Activated CD4-positive, alpha-beta T cell treated with anti-CD3 and anti-CD28 coated beads for 36 hours (primary cell): ENCODE measurements at regions of chr2 and their contacts with region 1.

Region 1: GRCh38 chr2:165953655-165954606 is at the start of gene TTC21B:
- DNase-seq: peak; percentile 96
- ATAC-seq: peak; percentile 96
- H3K4me3 Mint-ChIP-seq: no peak within 1 kb of the TSS
- H3K27ac Mint-ChIP-seq: peak within 1 kb of the TSS; percentile 70
- H3K4me1 Mint-ChIP-seq: peaks cover 12% of the 10 kb centered on the region
- H3K27me3 Mint-ChIP-seq: no peaks in the 10 kb centered on the region
- total RNA-seq, gene TTC21B: 24.5 to 28.5 TPM

Region 2: DNA sequence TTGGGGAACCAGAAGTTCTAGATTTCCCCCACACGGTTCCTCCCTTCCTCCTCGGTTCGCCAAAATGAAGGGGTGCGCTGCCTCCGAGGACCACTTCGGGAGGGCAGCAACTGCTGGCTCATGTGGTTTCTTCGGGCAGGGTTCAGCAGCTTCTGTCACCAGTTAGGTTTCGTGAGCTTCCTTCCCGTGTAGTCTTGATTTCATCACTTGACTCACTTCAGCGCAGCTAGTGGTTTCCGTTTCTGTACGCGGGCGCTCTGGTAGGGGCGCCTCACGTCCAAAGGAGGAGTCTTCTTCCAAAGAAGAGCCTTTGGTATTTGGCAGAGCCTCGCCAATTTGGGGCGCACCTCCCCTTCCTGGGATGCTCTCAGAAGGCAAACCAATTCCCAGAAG is 159.4 kb before region 1 on chr2:
- CTCF ChIA-PET with region 1: interaction called, 4 read pairs
- POLR2A ChIA-PET with region 1: no interaction called
- intact Hi-C with region 1: loop called in 1 of 2 experiments (anchors 1 kb)
- DNase-seq: peak; percentile 80
- ATAC-seq: peak; percentile 98
- H3K4me3 Mint-ChIP-seq: peak overlapping the region; percentile 83
- H3K27ac Mint-ChIP-seq: peak overlapping the region; percentile 91
- H3K4me1 Mint-ChIP-seq: peaks cover 15% of the 10 kb centered on the region
- H3K27me3 Mint-ChIP-seq: peaks cover 28% of the 10 kb centered on the region

Region 3: GRCh38 chr2:165833158-165833557 is 120.8 kb before region 1 on chr2:
- CTCF ChIA-PET with region 1: no interaction called
- POLR2A ChIA-PET with region 1: no interaction called
- intact Hi-C with region 1: no loop called
- DNase-seq: no peak
- ATAC-seq: no peak
- H3K4me3 Mint-ChIP-seq: no peak overlapping the region
- H3K27ac Mint-ChIP-seq: no peak overlapping the region
- H3K4me1 Mint-ChIP-seq: no peaks in the 10 kb centered on the region
- H3K27me3 Mint-ChIP-seq: no peaks in the 10 kb centered on the region

Region 4: DNA sequence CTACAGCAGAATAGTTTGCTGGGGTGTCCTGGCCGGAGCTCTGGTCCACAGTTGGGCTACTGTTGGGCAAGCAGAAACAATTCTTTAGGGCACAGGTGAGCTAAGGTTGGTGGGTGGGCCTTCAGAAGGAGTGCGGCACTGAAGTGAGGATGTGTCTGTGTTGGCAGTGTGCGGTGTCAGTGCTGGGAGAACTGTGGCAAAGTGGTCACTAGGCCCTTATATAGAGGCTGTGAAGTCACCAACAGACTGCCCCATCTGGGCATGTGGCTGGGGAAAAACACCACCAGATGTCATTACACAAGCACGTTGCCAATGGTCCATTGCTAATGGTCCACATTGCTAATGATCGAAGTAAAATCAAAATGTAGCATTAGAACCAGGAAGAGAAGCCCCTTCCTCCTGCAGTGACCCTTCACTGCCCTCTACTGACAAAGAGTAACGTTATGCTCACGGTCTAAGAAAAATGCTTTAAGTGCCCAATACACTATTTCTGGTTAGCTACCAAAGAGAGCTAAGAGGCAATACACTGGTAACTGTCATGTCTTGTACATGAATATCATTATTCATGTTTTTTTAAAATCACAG is 152.6 kb after region 1 on chr2:
- CTCF ChIA-PET with region 1: no interaction called
- POLR2A ChIA-PET with region 1: no interaction called
- intact Hi-C with region 1: loop called (anchors 5 kb)
- DNase-seq: no peak
- ATAC-seq: no peak
- H3K4me3 Mint-ChIP-seq: no peak overlapping the region
- H3K27ac Mint-ChIP-seq: no peak overlapping the region
- H3K4me1 Mint-ChIP-seq: no peaks in the 10 kb centered on the region
- H3K27me3 Mint-ChIP-seq: no peaks in the 10 kb centered on the region

Region 5: DNA sequence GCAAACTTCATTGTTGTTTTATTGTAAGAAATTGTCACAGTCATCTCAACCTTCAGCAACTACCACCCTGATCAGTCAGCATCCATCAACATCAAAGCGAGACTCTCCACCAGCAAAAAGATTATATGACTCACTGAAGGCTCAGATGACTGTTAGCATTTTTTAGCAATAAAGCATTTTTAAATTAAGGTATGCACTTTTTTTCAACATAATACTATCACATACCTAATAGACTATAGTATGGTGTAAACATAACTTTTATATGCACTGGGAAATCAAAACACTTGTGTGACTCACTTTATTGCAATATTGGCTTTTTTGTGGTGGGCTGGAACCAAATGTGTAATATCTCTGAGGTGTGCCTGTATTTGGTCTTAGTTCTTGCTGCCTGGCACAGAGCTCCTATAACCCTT is 158.3 kb after region 1 on chr2:
- CTCF ChIA-PET with region 1: no interaction called
- POLR2A ChIA-PET with region 1: no interaction called
- intact Hi-C with region 1: loop called (anchors 5 kb)
- DNase-seq: peak; percentile 16
- ATAC-seq: peak; percentile 91
- H3K4me3 Mint-ChIP-seq: no peak overlapping the region
- H3K27ac Mint-ChIP-seq: no peak overlapping the region
- H3K4me1 Mint-ChIP-seq: peaks cover 3% of the 10 kb centered on the region
- H3K27me3 Mint-ChIP-seq: no peaks in the 10 kb centered on the region

Region 6: DNA sequence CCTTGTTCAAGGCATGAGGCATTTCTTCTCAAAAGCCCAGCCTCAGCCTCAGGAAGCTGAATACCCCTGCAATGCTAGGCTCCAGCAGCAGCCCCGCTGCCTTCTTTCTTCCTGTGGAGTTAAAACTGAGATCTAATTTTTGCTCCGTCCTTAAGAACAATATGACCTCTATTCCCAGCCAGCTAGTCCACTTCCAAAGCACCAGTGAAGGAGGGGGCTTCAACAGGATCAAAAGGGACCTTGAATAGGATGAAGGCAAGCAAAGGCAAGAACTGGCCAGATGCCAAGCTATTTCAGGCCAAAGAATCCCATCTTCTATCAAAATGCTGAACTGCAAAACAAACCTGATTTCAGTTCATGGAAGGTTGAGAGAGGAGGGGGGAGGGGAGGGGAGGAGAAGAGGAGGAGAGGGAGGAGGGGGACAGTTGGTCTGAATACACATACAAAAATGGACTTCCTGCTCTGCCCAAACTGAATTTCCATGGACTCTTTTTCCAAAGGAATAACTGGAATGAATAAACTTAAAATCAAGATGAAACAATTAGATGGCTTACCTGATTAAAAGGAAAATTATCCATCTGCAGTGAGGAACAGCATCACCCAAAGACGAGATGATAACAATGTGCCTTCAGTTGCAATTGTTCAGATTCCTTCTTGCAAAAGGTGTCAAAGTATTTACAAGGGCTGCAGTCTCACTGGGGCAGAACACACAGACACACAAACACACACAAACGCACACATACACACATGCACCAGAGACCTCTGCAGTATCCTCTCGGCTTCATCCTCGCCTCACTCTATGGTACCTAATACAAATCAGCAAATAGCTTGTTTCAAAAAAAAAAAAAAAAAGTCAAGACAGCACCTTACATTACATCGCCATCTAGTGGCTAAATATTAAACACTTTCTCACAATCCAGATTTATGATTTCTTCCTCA is 173.6 kb after region 1 on chr2 and contains the start of gene SCN1A:
- CTCF ChIA-PET with region 1: interaction called, 19 read pairs
- POLR2A ChIA-PET with region 1: no interaction called
- intact Hi-C with region 1: loop called (anchors 1 kb)
- DNase-seq: no peak
- ATAC-seq: no peak
- H3K4me3 Mint-ChIP-seq: no peak within 1 kb of the TSS
- H3K27ac Mint-ChIP-seq: no peak within 1 kb of the TSS
- H3K4me1 Mint-ChIP-seq: peaks cover 2% of the 10 kb centered on the region
- H3K27me3 Mint-ChIP-seq: peaks cover 18% of the 10 kb centered on the region
- total RNA-seq, gene SCN1A: not detected

Region 7: GRCh38 chr2:166180951-166181812 is 227.3 kb after region 1 on chr2:
- CTCF ChIA-PET with region 1: interaction called, 5 read pairs
- POLR2A ChIA-PET with region 1: no interaction called
- intact Hi-C with region 1: loop called in 1 of 2 experiments (anchors 1 kb)
- DNase-seq: peak; percentile 60
- ATAC-seq: peak; percentile 66
- H3K4me3 Mint-ChIP-seq: no peak overlapping the region
- H3K27ac Mint-ChIP-seq: no peak overlapping the region
- H3K4me1 Mint-ChIP-seq: no peaks in the 10 kb centered on the region
- H3K27me3 Mint-ChIP-seq: peaks cover 6% of the 10 kb centered on the region

Region 8: GRCh38 chr2:166332106-166332505 is 378.2 kb after region 1 on chr2:
- CTCF ChIA-PET with region 1: no interaction called
- POLR2A ChIA-PET with region 1: no interaction called
- intact Hi-C with region 1: no loop called
- DNase-seq: no peak
- ATAC-seq: no peak
- H3K4me3 Mint-ChIP-seq: no peak overlapping the region
- H3K27ac Mint-ChIP-seq: no peak overlapping the region
- H3K4me1 Mint-ChIP-seq: no peaks in the 10 kb centered on the region
- H3K27me3 Mint-ChIP-seq: peaks cover 2% of the 10 kb centered on the region

Region 9: DNA sequence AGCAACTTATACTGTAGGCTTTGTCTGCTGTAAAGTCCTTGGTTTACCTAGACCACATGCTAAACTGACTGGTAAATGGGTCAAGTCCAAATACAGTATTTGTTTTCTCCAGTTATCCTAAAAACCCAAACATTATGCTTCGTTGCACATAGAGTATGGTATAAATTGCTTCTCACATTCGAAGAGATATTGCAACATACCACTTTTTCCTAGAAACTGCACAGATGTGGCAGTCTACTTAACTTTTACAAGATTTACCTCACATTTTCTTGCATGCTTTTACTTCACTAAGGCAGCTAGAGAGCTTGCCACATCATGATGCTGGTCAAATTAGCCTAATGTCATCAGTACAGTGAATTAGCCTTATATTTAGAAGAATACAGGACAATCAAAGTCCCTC is 606.1 kb after region 1 on chr2:
- CTCF ChIA-PET with region 1: no interaction called
- POLR2A ChIA-PET with region 1: no interaction called
- intact Hi-C with region 1: no loop called
- DNase-seq: no peak
- ATAC-seq: no peak
- H3K4me3 Mint-ChIP-seq: no peak overlapping the region
- H3K27ac Mint-ChIP-seq: no peak overlapping the region
- H3K4me1 Mint-ChIP-seq: no peaks in the 10 kb centered on the region
- H3K27me3 Mint-ChIP-seq: peaks cover 3% of the 10 kb centered on the region

Region 10: GRCh38 chr2:167292430-167293171 is 1338.7 kb after region 1 on chr2:
- CTCF ChIA-PET with region 1: no interaction called
- POLR2A ChIA-PET with region 1: no interaction called
- intact Hi-C with region 1: loop called in 1 of 2 experiments (anchors 5 kb)
- DNase-seq: peak; percentile 86
- ATAC-seq: peak; percentile 99
- H3K4me3 Mint-ChIP-seq: peak within 1 kb of the TSS; percentile 65
- H3K27ac Mint-ChIP-seq: no peak within 1 kb of the TSS
- H3K4me1 Mint-ChIP-seq: peaks cover 13% of the 10 kb centered on the region
- H3K27me3 Mint-ChIP-seq: peaks cover 38% of the 10 kb centered on the region